Mammary epithelial cell (primary cell): ENCODE measurements at regions of chr12 and their contacts with region 1.

Region 1: GRCh38 chr12:127125607-127126259 is 1141.2 kb upstream of the TMEM132C start:
- DNase-seq: peak; percentile 100
- H3K4me3 ChIP-seq: peak overlapping the region in 1 of 3 experiments; percentile 23
- H3K27ac ChIP-seq: peak overlapping the region; percentile 99
- H3K4me1 ChIP-seq: peaks cover 27% of the 10 kb centered on the region
- H3K27me3 ChIP-seq: no peaks in the 10 kb centered on the region
- CTCF ChIP-seq: peak in 1 of 2 donors; percentile 17

Region 2: GRCh38 chr12:127035011-127035879 is 90.5 kb before region 1 on chr12:
- CTCF ChIA-PET with region 1: no interaction called
- dilution Hi-C with region 1: no loop called
- in situ Hi-C with region 1: no loop called
- intact Hi-C with region 1: no loop called
- DNase-seq: no peak
- H3K4me3 ChIP-seq: no peak overlapping the region
- H3K27ac ChIP-seq: no peak overlapping the region
- H3K4me1 ChIP-seq: no peaks in the 10 kb centered on the region
- H3K27me3 ChIP-seq: no peaks in the 10 kb centered on the region
- CTCF ChIP-seq: no peak

Region 3: DNA sequence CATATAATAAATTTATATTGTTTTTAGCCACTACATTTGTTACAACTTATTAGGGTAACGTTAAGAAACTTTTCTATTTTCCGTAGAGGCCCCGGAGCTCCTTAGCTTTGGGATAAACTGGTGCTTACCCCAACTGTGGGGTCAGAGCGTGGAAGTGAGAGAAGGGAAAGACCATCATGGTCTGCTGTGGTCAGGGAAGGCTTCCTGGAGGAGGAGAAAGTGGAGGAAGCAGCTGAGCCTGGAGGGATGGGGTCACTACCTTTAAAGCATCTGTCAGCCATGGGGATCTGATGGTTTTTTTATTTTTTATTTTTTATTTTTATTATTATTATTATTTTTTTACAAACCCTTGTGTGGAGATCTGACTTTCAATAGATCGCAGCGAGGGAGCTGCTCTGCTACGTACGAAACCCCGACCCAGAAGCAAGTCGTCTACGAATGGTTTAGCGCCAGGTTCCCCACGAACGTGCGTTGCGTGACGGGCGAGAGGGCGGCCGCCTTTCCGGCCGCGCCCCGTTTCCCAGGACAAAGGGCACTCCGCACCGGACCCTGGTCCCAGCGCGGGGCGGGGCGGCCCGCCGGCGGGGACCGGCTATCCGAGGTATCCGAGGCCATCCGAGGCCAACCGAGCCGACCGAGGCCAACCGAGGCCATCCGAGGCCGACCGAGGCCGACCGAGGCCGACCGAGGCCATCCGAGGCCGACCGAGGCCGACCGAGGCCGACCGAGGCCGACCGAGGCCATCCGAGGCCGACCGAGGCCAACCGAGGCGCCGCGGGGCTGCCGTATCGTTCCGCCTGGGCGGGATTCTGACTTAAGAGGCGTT is 40.0 kb after region 1 on chr12:
- CTCF ChIA-PET with region 1: no interaction called
- dilution Hi-C with region 1: no loop called
- in situ Hi-C with region 1: no loop called
- intact Hi-C with region 1: loop called (anchors 1 kb)
- DNase-seq: peak; percentile 78
- H3K4me3 ChIP-seq: peak overlapping the region in 2 of 3 experiments; percentile 41 to 55
- H3K27ac ChIP-seq: peak overlapping the region; percentile 69
- H3K4me1 ChIP-seq: peaks cover 27% of the 10 kb centered on the region
- H3K27me3 ChIP-seq: no peaks in the 10 kb centered on the region
- CTCF ChIP-seq: no peak

Region 4: GRCh38 chr12:127241072-127241817 is 115.5 kb after region 1 on chr12:
- CTCF ChIA-PET with region 1: no interaction called
- dilution Hi-C with region 1: no loop called
- in situ Hi-C with region 1: no loop called
- intact Hi-C with region 1: loop called (anchors 1 kb)
- DNase-seq: peak; percentile 90
- H3K4me3 ChIP-seq: no peak overlapping the region
- H3K27ac ChIP-seq: peak overlapping the region; percentile 76
- H3K4me1 ChIP-seq: peaks cover 45% of the 10 kb centered on the region
- H3K27me3 ChIP-seq: no peaks in the 10 kb centered on the region
- CTCF ChIP-seq: no peak

Region 5: GRCh38 chr12:127280393-127281275 is 154.9 kb after region 1 on chr12:
- CTCF ChIA-PET with region 1: no interaction called
- dilution Hi-C with region 1: no loop called
- in situ Hi-C with region 1: loop called in 1 of 2 experiments (anchors 5 kb)
- intact Hi-C with region 1: loop called (anchors 1 kb)
- DNase-seq: peak; percentile 39
- H3K4me3 ChIP-seq: no peak overlapping the region
- H3K27ac ChIP-seq: no peak overlapping the region
- H3K4me1 ChIP-seq: peaks cover 17% of the 10 kb centered on the region
- H3K27me3 ChIP-seq: no peaks in the 10 kb centered on the region
- CTCF ChIP-seq: peak; percentile 91 to 92